ENCODE measurements at regions of chr15 and their contacts with region 1.

Region 1: DNA sequence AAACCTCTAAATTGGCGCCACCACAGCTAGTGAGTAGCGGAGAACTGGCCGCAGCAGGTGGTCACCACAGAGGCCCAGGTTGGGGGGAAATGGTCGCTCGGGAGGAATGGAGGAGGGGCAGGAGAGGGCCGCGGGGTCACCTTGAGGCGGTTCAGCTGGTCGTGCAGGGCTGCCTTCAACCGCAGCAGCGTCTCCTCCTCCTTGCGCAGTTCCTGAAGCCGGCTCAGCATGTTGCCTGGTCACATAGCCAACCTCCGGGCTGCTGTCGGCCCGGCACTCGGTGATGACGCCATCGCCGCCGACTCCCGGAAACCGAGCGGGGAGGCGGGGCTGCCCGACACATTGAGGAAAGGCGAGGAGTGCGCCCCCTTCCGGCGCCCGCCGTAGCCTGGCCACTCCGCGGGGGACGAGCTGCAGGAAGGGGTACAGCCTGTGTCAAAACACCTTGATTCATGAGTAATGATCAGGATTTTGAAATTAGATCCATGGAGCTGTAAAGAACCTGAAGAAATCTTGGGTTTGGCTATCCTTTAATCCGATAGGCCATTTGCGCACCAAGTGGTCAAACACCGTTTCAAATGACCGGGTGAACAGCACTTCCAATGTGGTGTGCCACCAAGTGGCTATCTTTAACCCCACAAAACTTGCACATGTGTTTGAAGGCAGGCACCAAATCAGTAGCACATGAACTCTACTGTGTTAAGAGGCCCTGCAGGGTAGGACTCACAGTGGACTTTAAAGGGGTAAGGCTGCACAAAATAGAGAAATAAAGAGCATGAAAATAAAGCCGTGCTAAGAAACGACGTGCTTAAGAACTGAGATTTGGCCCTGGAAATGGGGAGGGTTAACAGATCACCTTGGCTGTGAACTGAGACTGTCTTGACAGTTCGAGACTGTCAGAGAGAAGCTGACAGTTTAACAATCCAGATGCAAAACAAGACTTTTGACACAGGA is at the start of gene SNAPC5:
- DNase-seq: no peak
- H3K4me3 ChIP-seq: peak within 1 kb of the TSS; percentile 94
- CTCF ChIP-seq: peak; percentile 95

Region 2: DNA sequence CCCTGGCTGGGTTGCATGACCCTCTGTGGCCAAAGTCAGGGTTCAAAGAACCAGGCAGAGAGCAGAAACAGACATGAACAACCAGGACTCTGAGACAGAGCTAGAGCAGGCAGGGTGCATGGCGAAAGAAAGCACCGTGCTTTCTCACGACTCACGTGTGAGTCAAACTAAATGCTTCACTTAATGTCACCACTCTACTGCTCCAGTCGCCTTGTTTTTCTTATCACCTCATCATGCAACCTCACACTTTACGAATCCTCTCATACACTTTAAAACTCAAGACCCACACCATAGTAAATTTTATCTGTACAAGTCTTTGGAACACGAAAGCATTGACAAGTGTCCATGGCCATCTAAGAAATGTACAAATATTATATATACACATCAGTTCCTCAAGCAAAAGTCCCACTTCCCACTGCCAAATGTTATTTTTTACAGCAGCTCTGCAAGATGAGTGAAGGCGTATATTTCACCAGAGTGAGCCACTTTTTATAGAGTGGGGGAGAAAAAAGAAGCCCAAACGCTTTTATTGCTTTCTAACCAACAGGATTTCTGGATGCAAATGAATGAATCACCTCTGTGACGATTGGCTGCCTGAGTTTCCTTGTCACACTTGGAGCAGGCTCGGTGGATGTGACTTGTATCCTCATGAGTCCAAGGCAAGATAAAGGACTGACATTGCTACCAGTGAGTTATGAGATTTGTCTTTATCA is 228.3 kb before region 1 on chr15:
- CTCF ChIA-PET with region 1: no interaction called
- POLR2A ChIA-PET with region 1: no interaction called
- DNase-seq: no peak
- H3K4me3 ChIP-seq: no peak overlapping the region
- CTCF ChIP-seq: no peak

Region 3: DNA sequence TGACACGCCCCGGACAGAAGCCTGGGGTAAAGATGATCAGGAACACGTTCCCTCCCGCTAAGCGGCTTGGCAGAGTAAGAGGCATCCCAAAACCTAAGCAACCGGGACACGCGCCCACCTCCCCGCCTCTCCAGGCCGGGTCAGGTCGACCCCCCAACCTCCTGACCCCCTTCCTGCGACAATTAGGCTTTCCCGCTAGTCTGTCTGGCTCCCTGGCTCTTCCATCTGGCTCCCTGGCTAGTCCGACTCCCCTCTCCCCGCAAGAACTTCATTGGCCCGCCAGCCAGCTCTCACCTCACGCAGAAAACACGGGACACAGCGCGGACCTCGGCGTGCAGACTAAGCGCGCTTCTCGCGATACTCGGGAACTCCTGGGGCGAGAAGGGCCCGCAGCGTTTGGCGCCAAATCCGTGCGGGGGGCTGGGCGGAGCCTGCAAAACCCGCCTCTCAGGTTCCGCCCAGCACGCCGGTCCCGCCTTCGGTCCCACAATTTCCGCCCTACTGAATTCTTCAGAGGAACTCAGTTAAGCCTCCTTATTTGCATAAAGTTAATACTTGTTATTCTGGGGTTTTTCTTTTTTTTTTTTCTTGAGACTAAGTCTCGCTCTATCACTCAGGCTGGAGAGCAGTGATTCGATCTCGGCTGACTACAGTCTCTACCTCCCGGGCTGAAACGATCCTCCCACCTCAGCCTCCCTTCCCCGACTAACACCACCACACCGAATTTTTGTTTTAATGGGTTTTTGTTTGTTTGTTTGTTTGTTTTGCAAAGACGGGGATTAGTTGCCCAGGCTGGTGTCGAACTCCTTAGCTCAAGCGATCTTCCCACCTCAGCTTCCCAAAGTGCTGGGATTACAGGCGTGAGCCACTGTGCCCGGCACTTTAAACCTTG is 141.2 kb before region 1 on chr15 and contains the start of gene TIPIN:
- CTCF ChIA-PET with region 1: interaction called, 22 read pairs
- POLR2A ChIA-PET with region 1: no interaction called
- DNase-seq: peak; percentile 70
- H3K4me3 ChIP-seq: peak within 1 kb of the TSS; percentile 88
- CTCF ChIP-seq: no peak

Region 4: DNA sequence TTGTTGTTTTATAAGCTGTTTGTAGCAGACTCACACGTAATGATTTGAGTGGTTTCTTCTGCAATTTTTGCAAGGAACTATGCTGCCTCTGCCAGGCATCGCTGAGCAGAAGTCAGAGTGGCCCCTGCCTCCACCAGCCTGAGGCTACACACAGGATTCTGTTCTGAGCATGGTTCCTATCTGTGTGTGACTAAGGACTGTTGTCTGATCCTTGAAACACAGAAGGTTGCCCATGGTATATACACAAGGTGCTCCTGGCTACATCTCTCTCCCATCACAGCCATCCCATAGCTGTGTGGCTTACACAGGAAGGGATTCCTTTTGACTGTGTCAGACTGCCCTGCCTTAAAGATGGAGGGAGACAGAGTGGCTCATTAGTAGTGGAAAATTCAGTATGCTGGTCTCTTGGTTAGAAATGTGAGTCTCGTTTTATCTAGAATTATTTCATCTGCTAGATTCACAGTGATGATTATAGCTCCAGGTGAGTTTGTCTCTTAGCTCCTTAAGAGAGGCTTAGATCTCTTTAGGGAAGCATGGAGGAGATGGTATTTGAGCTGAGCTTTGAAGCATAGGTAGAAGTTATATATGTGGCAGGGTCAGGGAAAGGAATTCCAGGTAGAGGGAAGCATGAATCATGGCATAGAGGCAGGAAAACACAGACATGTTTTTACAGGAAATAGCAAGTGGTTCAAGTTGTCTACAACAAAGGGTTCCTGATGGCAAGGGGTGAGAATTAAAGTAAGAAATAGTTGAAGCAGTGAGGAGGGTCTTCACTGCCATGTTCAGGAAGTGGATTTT is 37.8 kb before region 1 on chr15:
- CTCF ChIA-PET with region 1: interaction called, 24 read pairs
- POLR2A ChIA-PET with region 1: no interaction called
- DNase-seq: no peak
- H3K4me3 ChIP-seq: no peak overlapping the region
- CTCF ChIP-seq: no peak

Region 5: DNA sequence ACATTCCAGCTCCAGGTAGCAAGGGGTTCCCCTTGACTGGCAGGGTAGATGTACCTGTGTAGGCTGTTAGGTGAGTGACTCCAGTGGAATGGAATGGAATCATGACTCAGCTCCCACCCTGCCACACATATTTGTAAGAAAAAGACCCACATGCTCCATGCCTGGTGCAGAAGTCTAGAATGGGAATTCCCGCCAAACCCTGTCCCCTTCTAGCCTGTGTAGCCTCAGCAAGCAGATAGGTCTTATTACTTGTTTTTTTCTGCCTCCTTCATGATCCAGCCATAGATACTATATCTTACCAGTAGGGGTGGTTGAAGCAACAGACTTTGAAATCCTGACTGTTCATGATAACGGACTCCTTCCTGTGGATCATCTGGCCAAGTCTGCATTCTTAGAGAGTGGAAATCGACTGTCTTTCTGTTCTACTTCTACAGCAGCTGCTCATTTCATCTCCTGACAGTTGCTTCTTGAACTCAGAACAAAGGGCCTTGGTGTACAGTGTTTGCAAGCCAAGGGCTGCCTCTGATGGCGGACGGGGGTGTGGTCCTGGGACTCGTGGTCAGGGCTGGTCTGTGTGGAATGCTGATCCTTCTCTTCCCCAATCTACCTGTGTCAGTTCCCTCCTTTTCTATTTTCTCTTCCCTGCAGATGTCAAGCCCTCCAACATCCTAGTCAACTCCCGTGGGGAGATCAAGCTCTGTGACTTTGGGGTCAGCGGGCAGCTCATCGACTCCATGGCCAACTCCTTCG is 16.5 kb before region 1 on chr15:
- CTCF ChIA-PET with region 1: interaction called, 47 read pairs
- POLR2A ChIA-PET with region 1: interaction called, 3 read pairs
- DNase-seq: no peak
- H3K4me3 ChIP-seq: no peak overlapping the region
- CTCF ChIP-seq: no peak

Region 6: GRCh38 chr15:66578286-66578875 is 80.6 kb after region 1 on chr15:
- CTCF ChIA-PET with region 1: interaction called, 15 read pairs
- POLR2A ChIA-PET with region 1: no interaction called
- DNase-seq: no peak
- H3K4me3 ChIP-seq: no peak overlapping the region
- CTCF ChIP-seq: no peak

Region 7: GRCh38 chr15:66619151-66619903 is 121.5 kb after region 1 on chr15:
- CTCF ChIA-PET with region 1: no interaction called
- POLR2A ChIA-PET with region 1: no interaction called
- DNase-seq: no peak
- H3K4me3 ChIP-seq: no peak overlapping the region
- CTCF ChIP-seq: peak; percentile 93

Region 8: GRCh38 chr15:66802087-66803001 is 304.6 kb after region 1 on chr15:
- CTCF ChIA-PET with region 1: no interaction called
- POLR2A ChIA-PET with region 1: no interaction called
- DNase-seq: no peak
- H3K4me3 ChIP-seq: peak overlapping the region; percentile 24
- CTCF ChIP-seq: no peak